A549 (cell line): ENCODE measurements at regions of chr5 and their contacts with region 1.

Region 1: GRCh38 chr5:76771705-76772405 is 47.0 kb upstream of the F2RL1 start:
- DNase-seq: peak in 1 of 2 experiments; percentile 91
- ATAC-seq: peak; percentile 92 to 98
- H3K4me3 ChIP-seq: no peak overlapping the region
- H3K27ac ChIP-seq: peak overlapping the region; percentile 81
- H3K4me1 ChIP-seq: peaks cover 19% of the 10 kb centered on the region
- CTCF ChIP-seq: no peak
- EP300 ChIP-seq: peak; percentile 65 to 69; a peak in 4 of 5 replicates
- POLR2A ChIP-seq: no peak
- RAD21 ChIP-seq: peak in 1 of 2 experiments; percentile 24; a peak in 1 of 5 replicates

Region 2: DNA sequence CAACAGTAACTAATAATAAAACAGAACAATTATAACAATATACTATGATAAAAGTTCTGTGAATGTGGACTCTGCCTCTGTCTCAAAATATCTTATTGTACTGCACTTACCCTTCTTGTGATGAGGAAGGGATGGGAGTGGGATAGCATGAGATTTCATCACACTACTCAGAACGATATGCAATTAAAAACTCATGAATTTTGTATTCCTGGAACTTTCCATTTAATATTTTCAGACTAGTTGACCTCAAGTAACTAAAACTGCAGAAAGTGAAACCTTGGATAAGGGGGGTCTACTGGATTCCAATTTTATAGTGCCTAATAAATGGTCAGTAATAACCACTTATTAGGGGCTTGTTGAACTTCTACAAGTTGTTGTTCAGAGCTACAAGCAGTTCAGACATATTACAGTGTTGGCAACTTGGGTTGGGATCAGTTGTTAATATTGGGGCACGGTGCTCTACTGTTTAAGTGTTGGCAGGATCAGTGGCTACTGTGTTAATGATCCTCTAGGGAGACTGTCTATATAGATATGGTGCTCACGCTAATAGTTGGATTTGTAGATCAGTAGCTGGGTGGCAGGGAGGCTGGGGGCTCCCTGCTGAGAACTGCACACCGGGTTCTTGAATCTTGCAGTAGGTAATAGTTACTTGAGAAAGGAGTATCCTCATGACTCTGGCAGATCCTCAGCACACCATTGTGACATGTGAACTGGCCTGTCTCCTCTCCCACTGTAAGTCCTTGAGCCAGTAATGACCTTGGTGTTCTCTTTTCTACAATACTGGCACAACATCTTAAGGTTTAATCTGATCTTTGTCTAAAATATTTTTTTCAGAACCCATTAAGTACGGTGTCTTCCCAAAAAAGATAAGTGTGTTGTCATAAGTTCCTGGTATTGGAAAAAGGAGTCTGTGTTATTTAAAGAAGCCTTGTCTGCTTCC is 210.6 kb before region 1 on chr5:
- CTCF ChIA-PET with region 1: no interaction called
- POLR2A ChIA-PET with region 1: no interaction called
- DNase-seq: no peak
- ATAC-seq: no peak
- H3K4me3 ChIP-seq: no peak overlapping the region
- H3K27ac ChIP-seq: no peak overlapping the region
- H3K4me1 ChIP-seq: no peaks in the 10 kb centered on the region
- CTCF ChIP-seq: no peak
- EP300 ChIP-seq: no peak
- POLR2A ChIP-seq: no peak
- RAD21 ChIP-seq: no peak

Region 3: DNA sequence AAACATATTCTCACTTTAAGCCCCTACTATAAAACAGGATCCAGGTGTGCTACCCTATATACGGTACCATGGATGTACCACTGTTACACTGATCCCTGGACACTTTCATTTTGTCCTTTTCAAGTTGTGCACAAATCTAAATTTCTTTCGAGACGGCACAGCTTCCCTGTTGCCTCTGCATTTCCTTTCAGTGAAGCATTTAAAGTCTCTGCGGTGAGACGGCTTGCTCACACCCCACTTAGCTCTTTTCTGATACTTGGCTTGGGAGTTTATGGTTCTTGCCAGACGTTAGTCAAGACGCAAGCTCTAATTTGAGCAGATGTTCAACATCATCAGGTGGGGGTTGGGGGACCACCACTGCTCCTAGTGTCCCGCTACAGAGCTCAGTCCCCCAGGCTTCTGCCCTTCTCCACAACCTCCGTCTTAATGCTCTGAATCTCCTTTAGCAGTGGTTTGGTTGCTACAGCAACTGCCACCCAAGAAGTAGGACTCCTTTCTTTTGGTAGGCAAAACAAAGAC is 164.4 kb before region 1 on chr5:
- CTCF ChIA-PET with region 1: interaction called, 145 read pairs
- POLR2A ChIA-PET with region 1: no interaction called
- DNase-seq: no peak
- ATAC-seq: no peak
- H3K4me3 ChIP-seq: no peak overlapping the region
- H3K27ac ChIP-seq: no peak overlapping the region
- H3K4me1 ChIP-seq: peaks cover 11% of the 10 kb centered on the region
- CTCF ChIP-seq: no peak
- EP300 ChIP-seq: no peak
- POLR2A ChIP-seq: no peak
- RAD21 ChIP-seq: no peak

Region 4: GRCh38 chr5:76715736-76716455 is 56.0 kb before region 1 on chr5 and contains the start of gene F2R:
- CTCF ChIA-PET with region 1: interaction called, 81 read pairs
- POLR2A ChIA-PET with region 1: interaction called, 4 read pairs
- DNase-seq: peak; percentile 69 to 79
- ATAC-seq: peak; percentile 93 to 96
- H3K4me3 ChIP-seq: peak within 1 kb of the TSS; percentile 98
- H3K27ac ChIP-seq: peak within 1 kb of the TSS; percentile 95 to 96
- H3K4me1 ChIP-seq: 0 out of 3 replicates have a peak, but pooled peaks cover 8% of the 10 kb centered on the region
- CTCF ChIP-seq: peak; percentile 81
- EP300 ChIP-seq: no peak
- POLR2A ChIP-seq: peak; percentile 30
- RAD21 ChIP-seq: peak; percentile 37 to 84; a peak in 4 of 5 replicates
- polyA plus RNA-seq, gene F2R: 114 and 131 TPM in 2 replicates

Region 5: DNA sequence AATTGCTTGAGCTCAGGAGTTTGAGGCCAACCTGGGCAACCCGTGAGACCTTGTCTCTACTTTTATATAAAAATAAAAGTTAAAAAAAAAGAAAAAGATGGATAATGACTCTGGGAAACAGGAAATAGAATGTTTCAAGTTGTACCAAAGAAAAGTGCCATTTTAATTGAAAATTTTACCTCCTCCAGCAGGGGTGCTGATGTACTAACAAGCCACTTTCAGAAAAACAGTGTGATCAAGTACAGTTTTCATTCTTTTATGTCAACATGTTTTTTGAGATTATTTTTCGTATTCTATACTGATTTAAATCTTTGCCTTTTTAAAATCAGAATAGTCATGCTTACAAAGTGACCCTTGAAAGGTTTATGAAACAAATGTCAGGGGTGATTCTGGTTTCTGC is 25.2 kb before region 1 on chr5:
- CTCF ChIA-PET with region 1: interaction called, 44 read pairs
- POLR2A ChIA-PET with region 1: no interaction called
- DNase-seq: no peak
- ATAC-seq: no peak
- H3K4me3 ChIP-seq: no peak overlapping the region
- H3K27ac ChIP-seq: 0 out of 6 replicates have a peak overlapping the region, but pooled peaks of 1 of the 2 experiments have one; percentile 15
- H3K4me1 ChIP-seq: 0 out of 3 replicates have a peak, but pooled peaks cover 6% of the 10 kb centered on the region
- CTCF ChIP-seq: no peak
- EP300 ChIP-seq: no peak
- POLR2A ChIP-seq: no peak
- RAD21 ChIP-seq: peak in 1 of 2 experiments; percentile 22; a peak in 3 of 5 replicates

Region 6: GRCh38 chr5:76790632-76791290 is 18.9 kb after region 1 on chr5:
- CTCF ChIA-PET with region 1: interaction called, 35 read pairs
- POLR2A ChIA-PET with region 1: interaction called, 6 read pairs
- DNase-seq: peak; percentile 76 to 94
- ATAC-seq: peak; percentile 81 to 82
- H3K4me3 ChIP-seq: no peak overlapping the region
- H3K27ac ChIP-seq: peak overlapping the region; percentile 82 to 87
- H3K4me1 ChIP-seq: peaks cover 76% of the 10 kb centered on the region
- CTCF ChIP-seq: no peak
- EP300 ChIP-seq: peak; percentile 83; a peak in 2 of 5 replicates
- POLR2A ChIP-seq: no peak
- RAD21 ChIP-seq: peak; percentile 7 to 38; a peak in 3 of 5 replicates

Region 7: GRCh38 chr5:76841361-76841760 is 69.5 kb after region 1 on chr5:
- CTCF ChIA-PET with region 1: interaction called, 11 read pairs
- POLR2A ChIA-PET with region 1: no interaction called
- DNase-seq: no peak
- ATAC-seq: peak; percentile 42 to 52
- H3K4me3 ChIP-seq: no peak overlapping the region
- H3K27ac ChIP-seq: no peak overlapping the region
- H3K4me1 ChIP-seq: peaks cover 27% of the 10 kb centered on the region
- CTCF ChIP-seq: no peak
- EP300 ChIP-seq: no peak
- POLR2A ChIP-seq: no peak
- RAD21 ChIP-seq: no peak

Region 8: DNA sequence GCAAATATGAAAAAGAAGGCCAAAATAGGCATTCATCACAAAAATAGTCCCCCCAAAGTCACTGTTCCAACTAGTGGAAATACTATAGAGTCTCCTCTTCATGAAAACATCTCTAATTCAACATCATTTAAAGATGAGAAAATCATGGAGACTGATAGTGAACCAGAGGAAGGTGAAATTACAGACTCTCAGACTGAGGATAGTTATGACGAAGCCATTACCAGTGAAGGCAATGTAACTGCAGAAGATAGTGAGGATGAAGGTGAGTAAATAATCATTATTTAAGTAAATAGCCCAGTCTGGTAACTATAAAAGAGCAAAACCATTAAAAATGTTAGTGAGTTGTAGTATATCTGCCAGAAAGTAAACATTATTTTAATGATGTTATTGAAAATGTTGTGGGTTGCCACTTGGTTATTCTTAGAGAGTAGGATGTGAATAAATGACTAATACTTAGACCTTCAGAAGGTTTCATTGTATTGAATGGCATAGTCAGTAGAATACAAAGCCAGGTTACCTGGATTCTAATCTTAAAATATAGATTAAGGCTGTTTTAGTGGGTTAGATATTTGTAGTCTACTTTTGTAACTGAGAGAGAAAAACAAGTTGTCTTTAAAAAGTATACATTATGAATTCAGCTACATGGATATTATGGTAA is 274.7 kb after region 1 on chr5:
- CTCF ChIA-PET with region 1: no interaction called
- POLR2A ChIA-PET with region 1: no interaction called
- DNase-seq: no peak
- ATAC-seq: no peak
- H3K4me3 ChIP-seq: no peak overlapping the region
- H3K27ac ChIP-seq: no peak overlapping the region
- H3K4me1 ChIP-seq: no peaks in the 10 kb centered on the region
- CTCF ChIP-seq: no peak
- EP300 ChIP-seq: no peak
- POLR2A ChIP-seq: no peak
- RAD21 ChIP-seq: no peak